ENCODE measurements at regions of chr11 and their contacts with region 1.

Region 1: GRCh38 chr11:90732486-90732885 is 509.6 kb upstream of the CHORDC1 start:
- DNase-seq: no peak

Region 2: DNA sequence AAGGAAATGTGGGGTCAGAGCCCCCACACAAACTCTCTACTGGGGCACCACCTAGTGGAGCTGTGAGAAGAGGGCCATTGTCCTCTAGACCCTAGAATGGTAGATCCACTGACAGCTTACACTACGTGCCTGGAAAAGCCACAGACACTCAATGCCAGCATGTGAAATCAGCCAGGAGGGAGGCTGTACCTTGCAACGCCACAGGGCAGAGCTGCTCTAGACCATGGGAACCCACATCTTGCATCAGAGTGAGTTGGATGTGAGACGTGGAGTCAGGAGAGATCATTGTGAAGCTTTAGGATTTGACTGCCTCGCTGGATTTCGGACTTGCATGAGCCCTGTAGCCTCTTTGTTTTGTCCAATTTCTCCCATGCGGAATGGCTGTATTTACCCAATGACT is 56.5 kb before region 1 on chr11:
- intact Hi-C with region 1: no loop called
- DNase-seq: no peak

Region 3: GRCh38 chr11:90779098-90779497 is 46.6 kb after region 1 on chr11:
- intact Hi-C with region 1: loop called (anchors 2 kb)
- DNase-seq: no peak

Region 4: DNA sequence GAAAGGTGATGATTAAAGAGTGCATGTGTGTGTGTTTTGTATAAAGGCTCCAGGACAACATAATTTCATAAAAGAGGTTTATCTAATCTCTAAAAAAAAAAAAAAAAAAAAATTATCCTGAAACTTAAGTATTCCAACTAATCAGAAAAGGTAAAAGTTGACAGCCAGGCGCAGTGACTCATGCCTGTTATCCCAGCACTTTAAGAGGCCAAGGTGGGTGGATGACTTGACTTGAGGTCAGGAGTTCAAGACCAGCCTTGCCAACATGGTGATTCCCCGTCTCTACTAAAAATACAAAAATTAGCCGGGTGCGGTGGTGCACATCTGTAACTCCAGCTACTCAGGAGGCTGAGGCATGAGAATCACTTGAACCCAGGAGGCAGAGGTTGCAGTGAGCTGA is 123.0 kb after region 1 on chr11:
- intact Hi-C with region 1: no loop called
- DNase-seq: no peak

Region 5: GRCh38 chr11:91209751-91210150 is 477.3 kb after region 1 on chr11:
- intact Hi-C with region 1: no loop called
- DNase-seq: no peak

Measured in cardiac septum (tissue), 1 donor.